Panc1 (cell line): ENCODE measurements at regions of chr10 and their contacts with region 1.

Region 1: GRCh38 chr10:89414146-89414878 is at the start of gene IFIT5:
- DNase-seq: peak; percentile 66
- ATAC-seq: peak; percentile 94
- H3K4me3 ChIP-seq: peak within 1 kb of the TSS; percentile 66 to 96
- H3K27ac ChIP-seq: peak within 1 kb of the TSS; percentile 87
- H3K4me1 ChIP-seq: peaks cover 11% of the 10 kb centered on the region
- H3K27me3 ChIP-seq: no peaks in the 10 kb centered on the region
- CTCF ChIP-seq: no peak
- total RNA-seq, gene IFIT5: 11.1 TPM

Region 2: DNA sequence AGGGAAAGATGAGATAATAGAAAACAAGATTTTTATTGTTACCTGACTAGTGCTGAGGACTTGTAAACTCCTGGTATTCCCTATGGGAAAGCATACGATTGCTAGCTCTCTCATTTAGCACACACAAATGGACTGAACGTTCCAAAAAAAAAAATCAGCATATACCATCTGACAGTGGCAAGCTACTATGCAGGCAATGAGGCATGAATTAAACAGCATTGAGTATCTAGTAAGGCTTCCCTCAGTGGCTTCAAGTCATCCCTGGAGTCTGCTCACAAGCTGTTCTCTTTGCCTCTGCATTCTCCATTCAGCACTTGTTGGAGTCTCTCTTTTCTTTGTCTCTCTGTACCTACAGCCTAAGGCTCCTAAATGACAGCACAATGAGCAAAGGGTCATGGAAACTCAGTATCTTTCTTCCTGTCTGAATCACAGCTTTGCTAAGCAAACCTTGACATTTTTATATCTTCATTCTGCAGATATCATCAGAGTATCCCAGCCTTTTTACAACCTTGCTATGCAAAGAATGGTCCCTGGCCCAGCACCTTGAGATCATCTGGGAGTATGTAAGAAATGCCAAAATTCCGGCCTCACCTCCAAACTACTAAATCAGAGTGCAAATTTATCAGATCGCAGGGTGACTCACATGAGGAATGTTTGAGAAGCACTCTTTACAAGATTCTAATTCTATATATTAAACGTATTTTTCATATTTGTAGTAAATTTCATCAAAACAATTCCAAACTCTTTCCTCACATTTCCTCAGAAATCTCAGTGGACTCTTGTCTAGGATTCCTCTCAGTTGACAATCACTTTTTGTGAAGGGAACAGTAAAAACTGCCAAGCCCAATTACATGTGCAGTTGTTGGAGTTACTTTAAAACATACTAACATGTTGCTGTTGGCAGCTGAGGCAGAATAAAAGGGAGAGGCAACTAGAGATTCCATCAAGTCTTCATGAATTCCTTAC is 151.9 kb before region 1 on chr10:
- CTCF ChIA-PET with region 1: no interaction called
- POLR2A ChIA-PET with region 1: no interaction called
- in situ Hi-C with region 1: no loop called
- intact Hi-C with region 1: no loop called
- DNase-seq: no peak
- ATAC-seq: peak; percentile 89
- H3K4me3 ChIP-seq: no peak overlapping the region
- H3K27ac ChIP-seq: peak overlapping the region; percentile 86
- H3K4me1 ChIP-seq: peaks cover 46% of the 10 kb centered on the region
- H3K27me3 ChIP-seq: no peaks in the 10 kb centered on the region
- CTCF ChIP-seq: no peak

Region 3: DNA sequence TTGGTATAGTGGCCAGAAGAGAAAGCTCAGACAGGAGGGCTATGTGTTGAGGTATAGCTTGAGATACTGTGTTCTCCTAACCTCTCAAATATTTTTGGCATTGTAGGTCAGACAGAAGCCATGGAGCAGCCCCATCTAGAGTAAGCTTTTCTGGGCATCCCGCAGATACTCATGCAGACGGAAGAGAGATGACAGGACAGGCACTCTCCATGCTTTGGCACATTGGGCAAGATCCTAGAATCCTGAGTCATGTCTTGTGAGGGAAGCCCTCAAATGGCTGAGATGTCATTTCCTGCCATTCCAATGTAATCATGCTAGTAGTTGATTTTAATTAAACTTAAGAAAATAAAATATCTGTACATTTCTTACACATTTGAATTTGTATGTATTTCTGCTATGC is 270.3 kb after region 1 on chr10:
- CTCF ChIA-PET with region 1: no interaction called
- POLR2A ChIA-PET with region 1: interaction called, 10 read pairs
- in situ Hi-C with region 1: no loop called
- intact Hi-C with region 1: no loop called
- DNase-seq: no peak
- ATAC-seq: no peak
- H3K4me3 ChIP-seq: no peak overlapping the region
- H3K27ac ChIP-seq: no peak overlapping the region
- H3K4me1 ChIP-seq: no peaks in the 10 kb centered on the region
- H3K27me3 ChIP-seq: no peaks in the 10 kb centered on the region
- CTCF ChIP-seq: no peak

Region 4: GRCh38 chr10:89845541-89846277 is 431.4 kb after region 1 on chr10:
- CTCF ChIA-PET with region 1: interaction called, 10 read pairs
- POLR2A ChIA-PET with region 1: no interaction called
- in situ Hi-C with region 1: no loop called
- intact Hi-C with region 1: no loop called
- DNase-seq: no peak
- ATAC-seq: no peak
- H3K4me3 ChIP-seq: no peak overlapping the region
- H3K27ac ChIP-seq: no peak overlapping the region
- H3K4me1 ChIP-seq: no peaks in the 10 kb centered on the region
- H3K27me3 ChIP-seq: peaks cover 5% of the 10 kb centered on the region; the same call in 1 of the 2 replicates
- CTCF ChIP-seq: no peak

Region 5: DNA sequence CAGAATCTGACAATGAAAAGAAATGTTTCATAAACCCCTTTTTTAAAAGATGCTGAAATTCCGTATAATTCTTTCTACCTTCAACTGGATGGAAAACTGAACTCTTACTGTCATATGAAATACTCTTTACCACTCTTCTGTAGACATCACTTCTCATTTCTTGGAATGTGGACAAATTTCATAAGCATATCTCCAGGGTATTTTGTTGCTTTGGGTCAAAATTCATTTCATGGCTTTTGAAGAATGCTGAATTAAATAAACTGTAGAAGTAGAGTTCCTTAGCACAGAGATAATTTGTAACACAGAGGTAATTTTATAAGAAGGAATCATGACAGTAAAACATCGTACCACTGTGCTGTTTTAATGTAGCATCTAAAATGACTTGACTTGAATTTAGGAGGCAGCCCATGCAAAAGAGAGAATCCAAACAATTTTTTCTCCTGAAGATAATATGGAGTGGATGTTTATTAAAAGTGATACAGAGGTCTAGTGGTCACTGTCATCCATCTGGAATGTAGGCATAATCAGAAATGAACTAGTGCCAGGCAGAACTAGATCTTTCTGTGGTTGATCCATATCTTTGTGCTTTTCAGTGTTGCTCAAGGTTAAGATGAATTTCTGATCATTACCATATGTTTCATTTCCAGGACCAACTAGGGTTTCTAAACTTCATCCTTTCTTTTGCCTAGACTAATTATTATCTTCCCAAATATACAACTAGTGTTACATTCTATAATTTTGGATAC is 779.1 kb after region 1 on chr10:
- CTCF ChIA-PET with region 1: no interaction called
- POLR2A ChIA-PET with region 1: no interaction called
- in situ Hi-C with region 1: no loop called
- intact Hi-C with region 1: no loop called
- DNase-seq: no peak
- ATAC-seq: no peak
- H3K4me3 ChIP-seq: no peak overlapping the region
- H3K27ac ChIP-seq: no peak overlapping the region
- H3K4me1 ChIP-seq: no peaks in the 10 kb centered on the region
- H3K27me3 ChIP-seq: no peaks in the 10 kb centered on the region
- CTCF ChIP-seq: no peak